ENCODE measurements at regions of chr3 and their contacts with region 1.

Region 1: DNA sequence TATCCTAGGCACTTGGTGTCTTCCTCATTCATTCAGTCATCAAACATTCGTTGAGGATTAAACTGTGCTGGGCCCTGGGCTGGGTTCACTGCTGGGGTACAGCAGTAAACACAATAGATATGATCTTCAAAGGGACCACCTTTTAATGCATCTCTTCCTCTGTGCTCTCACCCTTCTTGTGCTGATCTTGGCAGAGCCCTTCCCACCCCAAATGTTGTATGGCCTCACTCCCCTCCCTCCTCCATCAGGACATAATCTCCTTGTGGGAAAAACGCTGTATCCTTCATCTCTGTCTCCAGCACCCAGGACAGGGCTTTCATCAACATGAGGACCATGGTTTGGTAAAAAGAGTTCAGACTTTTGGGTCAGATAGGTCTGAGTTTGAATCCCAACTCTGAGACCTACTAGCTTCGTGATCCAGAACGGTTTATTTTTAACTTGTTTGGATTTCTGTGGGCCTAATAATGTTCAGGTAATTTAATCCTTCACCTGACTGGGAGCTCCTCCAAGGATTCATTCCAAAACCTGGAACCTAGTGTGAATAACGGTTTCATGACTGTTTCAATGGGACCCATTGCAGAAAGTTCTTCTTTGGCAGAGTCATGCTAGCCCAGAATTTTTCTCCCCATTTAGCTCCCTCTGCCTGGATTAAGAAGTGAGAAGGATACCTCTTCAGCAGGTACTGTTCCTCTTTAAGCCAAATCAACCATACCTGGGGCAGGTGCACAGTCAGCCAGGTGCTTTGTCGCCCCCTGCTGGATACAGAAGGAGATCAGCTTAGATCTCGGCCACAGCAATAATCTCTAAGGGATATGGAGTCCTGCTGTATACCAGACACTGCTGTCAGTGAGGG is 5.2 kb upstream of the WNT7A start:
- DNase-seq: peak; percentile 77 to 80 (median 78)
- H3K4me3 ChIP-seq: no peak overlapping the region
- H3K4me3 Mint-ChIP-seq: peak overlapping the region in 2 of 8 donors; percentile 60 to 74
- H3K27ac ChIP-seq: no peak overlapping the region
- H3K27ac Mint-ChIP-seq: peak overlapping the region in 5 of 7 donors; percentile 1 to 76 (median 63)
- H3K4me1 ChIP-seq: peaks cover 20% of the 10 kb centered on the region
- H3K4me1 Mint-ChIP-seq: peaks cover 4 to 31% (median 16%) of the 10 kb centered on the region in 4 donors
- H3K27me3 ChIP-seq: no peaks in the 10 kb centered on the region
- H3K27me3 Mint-ChIP-seq: peaks cover 16 to 17% of the 10 kb centered on the region in 2 donors

Region 2: GRCh38 chr3:13495921-13496723 is 389.0 kb before region 1 on chr3:
- CTCF ChIA-PET with region 1: interaction called, 19 read pairs
- POLR2A ChIA-PET with region 1: no interaction called
- intact Hi-C with region 1: loop called (anchors 1 kb)
- DNase-seq: peak; percentile 62 to 68 (median 63)
- H3K4me3 ChIP-seq: no peak overlapping the region
- H3K4me3 Mint-ChIP-seq: no peak overlapping the region
- H3K27ac ChIP-seq: no peak overlapping the region
- H3K27ac Mint-ChIP-seq: no peak overlapping the region
- H3K4me1 ChIP-seq: no peaks in the 10 kb centered on the region
- H3K4me1 Mint-ChIP-seq: peaks cover 0 to 5% (median under 1%) of the 10 kb centered on the region in 4 donors
- H3K27me3 ChIP-seq: no peaks in the 10 kb centered on the region
- H3K27me3 Mint-ChIP-seq: no peaks in the 10 kb centered on the region

Region 3: DNA sequence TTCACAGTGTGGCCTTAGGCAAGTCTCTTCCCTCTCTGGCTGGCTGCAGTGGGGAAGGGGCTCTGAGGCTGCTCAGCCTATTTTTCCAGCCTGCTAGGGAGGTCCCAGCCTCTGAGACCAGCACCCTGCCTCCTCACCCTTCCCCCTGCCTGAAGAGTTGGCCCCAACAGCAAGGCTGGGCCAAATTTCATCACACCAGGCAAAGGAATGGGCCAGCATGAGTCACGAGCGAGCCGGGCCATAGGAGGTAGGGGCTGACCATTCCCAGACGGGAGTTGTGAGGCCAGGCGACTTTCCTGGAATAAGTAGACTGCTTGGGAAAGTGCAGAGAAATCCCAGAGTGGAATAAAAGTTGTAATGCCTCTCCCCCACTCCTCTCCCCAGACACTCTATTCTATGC is 341.8 kb before region 1 on chr3:
- CTCF ChIA-PET with region 1: no interaction called
- POLR2A ChIA-PET with region 1: no interaction called
- intact Hi-C with region 1: no loop called
- DNase-seq: no peak
- H3K4me3 ChIP-seq: no peak overlapping the region
- H3K4me3 Mint-ChIP-seq: no peak overlapping the region
- H3K27ac ChIP-seq: no peak overlapping the region
- H3K27ac Mint-ChIP-seq: no peak overlapping the region
- H3K4me1 ChIP-seq: peaks cover 11% of the 10 kb centered on the region
- H3K4me1 Mint-ChIP-seq: peaks cover 12 to 30% (median 18%) of the 10 kb centered on the region in 4 donors
- H3K27me3 ChIP-seq: no peaks in the 10 kb centered on the region
- H3K27me3 Mint-ChIP-seq: peaks cover 16 to 43% of the 10 kb centered on the region in 2 donors

Region 4: DNA sequence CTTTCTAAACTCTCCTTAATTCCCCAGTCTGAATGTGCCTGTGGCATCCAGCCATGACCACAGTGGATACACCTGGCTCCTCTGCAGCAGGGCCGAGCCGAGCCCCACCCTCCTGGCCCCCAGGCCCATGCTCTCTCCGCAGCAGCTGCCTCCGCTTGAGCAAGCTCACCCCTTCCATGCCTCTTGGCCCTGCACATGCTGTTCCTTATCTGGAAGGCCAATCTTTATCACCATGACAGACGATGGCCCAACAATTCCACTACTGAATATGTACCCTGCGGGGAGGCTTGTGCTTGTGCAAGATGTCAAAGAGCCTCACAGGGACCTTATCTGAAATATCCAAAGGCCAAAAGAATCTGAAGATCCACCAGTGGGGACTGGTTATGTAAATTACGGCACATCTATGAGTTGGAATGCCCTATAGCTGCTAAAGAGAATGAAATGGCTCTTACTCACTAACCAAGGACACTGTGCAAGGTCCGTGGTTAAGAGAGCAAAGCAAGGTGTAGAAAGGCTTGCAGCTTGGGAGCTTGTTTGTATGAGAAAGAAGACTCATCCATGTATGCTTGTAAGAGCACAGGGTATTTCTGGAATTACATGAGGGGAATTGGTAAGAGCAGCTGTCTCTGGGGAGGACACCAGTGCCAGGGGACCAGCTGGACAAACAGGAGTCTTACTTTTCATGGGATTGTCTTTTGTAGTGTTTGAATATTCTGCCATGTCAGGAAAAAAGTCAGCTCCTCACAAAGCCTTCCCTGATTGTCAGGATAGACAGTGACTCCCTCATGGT is 60.4 kb before region 1 on chr3:
- CTCF ChIA-PET with region 1: interaction called, 32 read pairs
- POLR2A ChIA-PET with region 1: interaction called, 4 read pairs
- intact Hi-C with region 1: loop called (anchors 1 kb)
- DNase-seq: no peak
- H3K4me3 ChIP-seq: no peak overlapping the region
- H3K4me3 Mint-ChIP-seq: no peak overlapping the region
- H3K27ac ChIP-seq: no peak overlapping the region
- H3K27ac Mint-ChIP-seq: peak overlapping the region in 3 of 7 donors; percentile 18 to 73 (median 29)
- H3K4me1 ChIP-seq: no peaks in the 10 kb centered on the region
- H3K4me1 Mint-ChIP-seq: peaks cover 2 to 37% (median 9%) of the 10 kb centered on the region in 4 donors
- H3K27me3 ChIP-seq: no peaks in the 10 kb centered on the region
- H3K27me3 Mint-ChIP-seq: no peaks in the 10 kb centered on the region

Region 5: GRCh38 chr3:13857702-13858413 is 27.2 kb before region 1 on chr3:
- CTCF ChIA-PET with region 1: interaction called, 17 read pairs
- POLR2A ChIA-PET with region 1: interaction called, 11 read pairs
- intact Hi-C with region 1: no loop called
- DNase-seq: no peak
- H3K4me3 ChIP-seq: no peak overlapping the region
- H3K4me3 Mint-ChIP-seq: no peak overlapping the region
- H3K27ac ChIP-seq: no peak overlapping the region
- H3K27ac Mint-ChIP-seq: peak overlapping the region in 3 of 7 donors; percentile 48 to 79 (median 79)
- H3K4me1 ChIP-seq: peaks cover 12% of the 10 kb centered on the region
- H3K4me1 Mint-ChIP-seq: peaks cover 8 to 55% (median 17%) of the 10 kb centered on the region in 4 donors
- H3K27me3 ChIP-seq: no peaks in the 10 kb centered on the region
- H3K27me3 Mint-ChIP-seq: no peaks in the 10 kb centered on the region

Region 6: GRCh38 chr3:13872451-13872850 is 12.6 kb before region 1 on chr3:
- CTCF ChIA-PET with region 1: interaction called, 48 read pairs
- POLR2A ChIA-PET with region 1: interaction called, 137 read pairs
- intact Hi-C with region 1: no loop called
- DNase-seq: no peak
- H3K4me3 ChIP-seq: no peak overlapping the region
- H3K4me3 Mint-ChIP-seq: peak overlapping the region in 1 of 8 donors; percentile 27
- H3K27ac ChIP-seq: no peak overlapping the region
- H3K27ac Mint-ChIP-seq: peak overlapping the region; percentile 16 to 86 (median 59)
- H3K4me1 ChIP-seq: peaks cover 26% of the 10 kb centered on the region
- H3K4me1 Mint-ChIP-seq: peaks cover 25 to 65% (median 40%) of the 10 kb centered on the region in 4 donors
- H3K27me3 ChIP-seq: no peaks in the 10 kb centered on the region
- H3K27me3 Mint-ChIP-seq: peaks cover 0 to 1% of the 10 kb centered on the region in 2 donors

Measured in CD4-positive, alpha-beta memory T cell (primary cell).